Calu3 (cell line): ENCODE measurements at regions of chr2 and their contacts with region 1.

Region 1: GRCh38 chr2:113203901-113204519 is 30.2 kb downstream of the PSD4 start:
- DNase-seq: peak; percentile 87
- H3K4me3 Mint-ChIP-seq: no peak overlapping the region
- H3K27ac Mint-ChIP-seq: peak overlapping the region; percentile 65
- H3K4me1 Mint-ChIP-seq: peaks cover 15% of the 10 kb centered on the region
- H3K27me3 Mint-ChIP-seq: no peaks in the 10 kb centered on the region
- CTCF ChIP-seq: peak; percentile 83

Region 2: DNA sequence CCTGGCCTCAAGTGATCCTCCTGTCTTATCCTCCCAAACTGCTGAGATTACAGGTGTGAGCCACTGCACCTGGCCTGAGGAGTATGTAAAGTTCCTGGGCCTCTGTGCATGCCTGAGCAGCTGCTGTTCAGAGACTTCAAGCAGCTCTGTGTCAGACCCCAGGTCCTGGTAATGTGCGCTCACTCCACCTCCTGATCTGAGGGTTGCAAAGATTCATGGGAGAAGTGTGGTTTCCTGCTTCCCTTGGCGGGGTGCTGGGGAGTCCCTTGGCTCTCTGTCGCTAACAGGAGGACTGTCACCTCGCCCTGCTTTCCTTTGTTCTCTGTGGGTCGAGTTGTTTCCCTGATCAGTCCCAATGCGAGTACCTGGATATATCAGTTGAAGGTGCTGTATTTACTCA is 207.4 kb before region 1 on chr2:
- CTCF ChIA-PET with region 1: no interaction called
- intact Hi-C with region 1: no loop called
- DNase-seq: no peak
- H3K4me3 Mint-ChIP-seq: no peak overlapping the region
- H3K27ac Mint-ChIP-seq: no peak overlapping the region
- H3K4me1 Mint-ChIP-seq: no peaks in the 10 kb centered on the region
- H3K27me3 Mint-ChIP-seq: peaks cover 21% of the 10 kb centered on the region
- CTCF ChIP-seq: no peak

Region 3: DNA sequence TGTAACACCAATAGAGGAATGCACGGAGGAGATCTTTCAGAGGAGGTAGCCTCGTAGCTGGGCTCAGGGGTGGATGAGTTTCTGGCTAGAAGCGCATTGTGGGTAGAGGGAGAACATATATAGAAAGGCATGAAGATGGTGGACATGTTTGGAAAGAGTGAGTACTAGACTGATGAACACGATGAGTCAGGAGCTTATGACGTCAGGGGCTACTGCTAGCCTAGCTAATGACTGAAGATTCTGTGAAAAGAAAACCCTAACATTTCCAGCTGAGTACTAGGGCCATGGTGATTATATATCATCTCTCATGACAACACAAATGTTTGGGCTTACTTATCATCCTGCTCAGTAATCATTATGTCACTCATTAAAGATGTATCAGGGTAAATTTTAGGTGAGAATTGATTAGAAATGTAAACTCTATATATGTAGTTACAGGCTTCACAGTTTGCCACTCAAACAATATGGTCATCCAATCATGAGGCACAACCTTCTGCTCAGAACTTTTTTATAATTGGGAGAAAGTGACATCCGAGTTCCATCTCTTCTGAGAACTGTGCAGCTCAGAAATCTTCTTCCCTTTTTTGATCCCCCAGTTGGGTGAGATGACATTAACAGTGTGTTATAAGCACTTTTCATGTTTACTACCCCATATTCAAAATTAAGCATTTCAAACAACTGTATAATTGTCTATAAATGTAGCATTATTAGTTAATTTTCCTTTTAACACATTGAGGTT is 98.8 kb before region 1 on chr2:
- CTCF ChIA-PET with region 1: no interaction called
- intact Hi-C with region 1: no loop called
- DNase-seq: no peak
- H3K4me3 Mint-ChIP-seq: no peak overlapping the region
- H3K27ac Mint-ChIP-seq: no peak overlapping the region
- H3K4me1 Mint-ChIP-seq: no peaks in the 10 kb centered on the region
- H3K27me3 Mint-ChIP-seq: no peaks in the 10 kb centered on the region
- CTCF ChIP-seq: no peak

Region 4: GRCh38 chr2:113138428-113139322 is 65.3 kb before region 1 on chr2:
- CTCF ChIA-PET with region 1: interaction called, 35 read pairs
- intact Hi-C with region 1: loop called (anchors 1 kb)
- DNase-seq: peak; percentile 77
- H3K4me3 Mint-ChIP-seq: no peak overlapping the region
- H3K27ac Mint-ChIP-seq: no peak overlapping the region
- H3K4me1 Mint-ChIP-seq: peaks cover 20% of the 10 kb centered on the region
- H3K27me3 Mint-ChIP-seq: no peaks in the 10 kb centered on the region
- CTCF ChIP-seq: peak; percentile 58

Region 5: DNA sequence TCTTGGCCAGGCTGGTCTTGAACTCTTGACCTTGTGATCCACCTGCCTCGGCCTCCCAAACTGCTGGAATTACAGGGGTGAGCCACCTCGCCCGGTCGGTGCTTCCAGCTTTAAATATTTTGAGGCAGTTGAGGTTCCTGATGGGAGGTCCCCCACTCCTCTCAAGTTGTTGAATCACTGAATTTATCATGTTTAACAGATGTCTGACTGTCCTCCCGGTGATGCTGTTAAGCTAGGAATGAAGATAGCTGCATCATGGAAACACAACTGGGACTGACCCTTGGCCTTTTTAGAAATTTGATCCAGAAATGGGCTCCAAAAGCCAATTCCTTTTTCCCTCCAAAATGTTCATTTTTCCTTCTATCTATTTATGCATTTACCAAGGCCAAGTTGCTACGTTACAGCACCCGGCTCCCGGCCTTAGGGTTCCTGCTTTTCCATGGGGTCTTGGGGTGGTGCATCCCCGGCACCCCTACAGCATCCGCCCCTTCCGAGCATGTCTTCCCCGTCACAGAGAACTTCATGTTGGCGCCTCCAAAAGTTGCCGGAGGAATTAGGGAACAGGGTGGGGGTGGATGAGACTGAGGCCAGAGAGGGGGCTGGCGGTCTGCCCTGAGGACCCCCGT is 30.8 kb after region 1 on chr2:
- CTCF ChIA-PET with region 1: interaction called, 13 read pairs
- intact Hi-C with region 1: loop called (anchors 1 kb)
- DNase-seq: no peak
- H3K4me3 Mint-ChIP-seq: peak overlapping the region; percentile 88
- H3K27ac Mint-ChIP-seq: peak overlapping the region; percentile 95
- H3K4me1 Mint-ChIP-seq: peaks cover 20% of the 10 kb centered on the region
- H3K27me3 Mint-ChIP-seq: no peaks in the 10 kb centered on the region
- CTCF ChIP-seq: no peak

Region 6: GRCh38 chr2:113240150-113240862 is 36.3 kb after region 1 on chr2:
- CTCF ChIA-PET with region 1: interaction called, 18 read pairs
- intact Hi-C with region 1: loop called (anchors 1 kb)
- DNase-seq: peak; percentile 74
- H3K4me3 Mint-ChIP-seq: peak overlapping the region; percentile 35
- H3K27ac Mint-ChIP-seq: peak overlapping the region; percentile 94
- H3K4me1 Mint-ChIP-seq: peaks cover 48% of the 10 kb centered on the region
- H3K27me3 Mint-ChIP-seq: no peaks in the 10 kb centered on the region
- CTCF ChIP-seq: no peak

Region 7: DNA sequence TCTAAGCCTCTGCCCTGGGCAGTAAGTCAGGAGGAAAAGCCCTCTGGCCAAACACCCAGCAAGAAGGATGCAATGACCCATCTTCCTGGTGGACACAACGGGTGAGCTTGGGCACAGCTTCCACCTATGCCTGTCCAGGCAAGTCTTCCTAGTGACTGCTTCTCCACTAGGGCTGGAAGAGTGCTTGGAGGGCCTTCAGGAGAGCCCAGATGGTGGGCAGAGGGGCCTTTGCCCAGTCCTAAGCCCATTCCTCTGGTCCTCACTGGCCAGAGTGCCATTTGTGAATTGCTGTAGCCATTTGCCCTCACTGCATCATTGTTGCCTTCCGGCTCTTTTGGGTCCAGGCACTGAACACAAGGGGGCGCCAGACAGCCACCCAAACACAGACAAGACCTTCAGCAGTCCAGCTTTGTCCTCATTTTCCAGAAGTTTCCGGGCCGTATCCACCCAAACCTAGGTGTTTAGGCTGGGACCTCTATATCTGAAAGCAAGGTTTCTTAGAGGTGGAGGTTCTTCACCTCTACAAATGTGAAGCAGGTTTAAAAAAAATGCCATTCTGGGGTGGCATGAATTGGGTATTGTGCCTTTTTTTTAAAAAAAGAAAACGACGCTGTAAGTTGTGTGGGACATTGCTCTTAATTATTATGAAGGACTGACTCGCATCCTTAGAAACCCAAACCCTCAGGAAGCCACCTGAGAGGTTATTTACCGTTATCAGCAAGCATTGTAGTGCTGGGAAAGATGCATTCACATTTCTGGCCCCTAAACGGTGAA is 45.2 kb after region 1 on chr2:
- CTCF ChIA-PET with region 1: interaction called, 20 read pairs
- intact Hi-C with region 1: loop called (anchors 1 kb)
- DNase-seq: peak; percentile 84
- H3K4me3 Mint-ChIP-seq: no peak overlapping the region
- H3K27ac Mint-ChIP-seq: peak overlapping the region; percentile 28
- H3K4me1 Mint-ChIP-seq: peaks cover 49% of the 10 kb centered on the region
- H3K27me3 Mint-ChIP-seq: no peaks in the 10 kb centered on the region
- CTCF ChIP-seq: peak; percentile 87

Region 8: DNA sequence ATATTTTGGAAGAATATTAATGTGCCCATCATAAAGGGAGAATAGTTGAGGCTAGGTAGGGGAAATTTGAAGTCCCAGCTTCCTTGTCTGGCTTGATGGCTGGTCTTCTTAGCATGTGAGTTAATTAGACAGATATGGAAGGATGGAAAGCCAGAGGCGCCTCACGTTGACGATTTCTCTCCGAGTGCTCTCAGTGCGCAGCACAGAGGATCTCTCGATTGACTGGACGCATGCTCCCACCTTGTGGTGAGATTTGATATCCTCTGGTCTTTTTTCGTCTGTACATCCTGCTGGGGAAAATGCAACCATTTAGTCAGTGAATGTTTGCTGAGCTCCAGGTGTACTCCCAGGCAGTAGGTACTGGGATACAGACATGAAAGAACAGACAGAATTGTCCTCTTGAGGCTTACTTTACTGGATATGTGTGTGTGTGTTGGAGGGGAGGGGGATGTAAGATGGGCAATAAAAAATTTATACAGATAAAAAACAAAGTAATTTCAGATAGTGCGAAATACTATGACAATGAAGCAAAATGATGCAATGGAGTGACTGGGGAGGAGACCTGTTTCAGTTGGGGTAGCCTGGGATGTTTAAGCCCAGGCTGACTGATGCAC is 166.6 kb after region 1 on chr2:
- CTCF ChIA-PET with region 1: interaction called, 33 read pairs
- intact Hi-C with region 1: loop called (anchors 1 kb)
- DNase-seq: peak; percentile 83
- H3K4me3 Mint-ChIP-seq: no peak overlapping the region
- H3K27ac Mint-ChIP-seq: peak overlapping the region; percentile 50
- H3K4me1 Mint-ChIP-seq: peaks cover 25% of the 10 kb centered on the region
- H3K27me3 Mint-ChIP-seq: no peaks in the 10 kb centered on the region
- CTCF ChIP-seq: peak; percentile 58

Region 9: DNA sequence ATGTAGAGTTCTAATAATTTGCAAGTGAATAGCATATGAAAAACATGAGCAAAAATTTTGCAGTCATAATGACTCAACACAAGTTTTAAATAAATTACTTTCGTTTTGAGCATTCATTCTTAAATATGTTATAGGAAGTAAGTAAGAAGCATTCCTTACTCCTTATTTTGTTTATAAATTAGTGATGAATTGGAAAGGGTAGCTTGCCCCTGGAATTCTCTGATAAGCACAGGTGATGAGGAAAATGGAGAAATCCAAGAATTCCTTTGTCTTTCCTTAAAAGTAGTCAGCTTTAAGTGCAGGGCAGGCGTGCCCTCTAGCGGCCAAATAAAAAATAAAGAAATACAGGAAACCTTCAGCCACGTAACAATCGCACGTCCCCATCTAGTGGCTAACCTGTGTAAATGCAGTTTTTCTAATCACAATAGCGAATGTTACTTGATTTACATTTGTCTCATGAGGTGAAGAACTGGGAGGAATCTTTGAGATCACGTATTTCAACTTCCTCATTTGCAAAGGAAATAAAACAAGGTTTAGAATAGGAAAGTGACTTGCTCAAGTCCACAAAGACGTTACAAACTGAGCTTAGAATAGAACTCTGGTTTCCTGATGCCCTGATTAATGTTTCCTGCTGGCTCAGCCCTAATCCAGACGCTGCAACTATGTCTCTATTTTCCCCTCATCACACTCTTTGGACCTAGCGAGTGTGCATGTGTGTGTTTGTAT is 186.3 kb after region 1 on chr2:
- CTCF ChIA-PET with region 1: interaction called, 22 read pairs
- intact Hi-C with region 1: loop called (anchors 2 kb)
- DNase-seq: peak; percentile 77
- H3K4me3 Mint-ChIP-seq: no peak overlapping the region
- H3K27ac Mint-ChIP-seq: peak overlapping the region; percentile 22
- H3K4me1 Mint-ChIP-seq: no peaks in the 10 kb centered on the region
- H3K27me3 Mint-ChIP-seq: no peaks in the 10 kb centered on the region
- CTCF ChIP-seq: peak; percentile 92

Region 10: GRCh38 chr2:115036818-115037217 is 1832.8 kb after region 1 on chr2:
- CTCF ChIA-PET with region 1: no interaction called
- intact Hi-C with region 1: no loop called
- DNase-seq: no peak
- H3K4me3 Mint-ChIP-seq: no peak overlapping the region
- H3K27ac Mint-ChIP-seq: no peak overlapping the region
- H3K4me1 Mint-ChIP-seq: no peaks in the 10 kb centered on the region
- H3K27me3 Mint-ChIP-seq: no peaks in the 10 kb centered on the region
- CTCF ChIP-seq: no peak